Activated CD4-positive, alpha-beta T cell treated with anti-CD3 and anti-CD28 coated beads, Interleukin-2, amount 10 ng/mL, durations not matched to agents 24 days and 14 days (primary cell): ENCODE measurements at regions of chrX and their contacts with region 1.

Region 1: GRCh38 chrX:149539283-149540130 is 1.3 kb upstream of the EOLA1 start:
- DNase-seq: peak; percentile 95
- H3K4me3 Mint-ChIP-seq: peak overlapping the region; percentile 100
- H3K27ac Mint-ChIP-seq: peak overlapping the region; percentile 91
- H3K4me1 Mint-ChIP-seq: peaks cover 12% of the 10 kb centered on the region
- H3K27me3 Mint-ChIP-seq: no peaks in the 10 kb centered on the region

Region 2: GRCh38 chrX:149504915-149505651 is 34.4 kb before region 1 on chrX and contains the start of gene IDS:
- intact Hi-C with region 1: loop called (anchors 2 kb)
- DNase-seq: peak; percentile 97
- H3K4me3 Mint-ChIP-seq: peak within 1 kb of the TSS; percentile 88
- H3K27ac Mint-ChIP-seq: peak within 1 kb of the TSS; percentile 96
- H3K4me1 Mint-ChIP-seq: peaks cover 31% of the 10 kb centered on the region
- H3K27me3 Mint-ChIP-seq: no peaks in the 10 kb centered on the region
- total RNA-seq, gene IDS: 43.9 and 44.9 TPM in 2 replicates

Region 3: GRCh38 chrX:150568320-150569154 is 1029.0 kb after region 1 on chrX and contains the start of gene MTM1:
- intact Hi-C with region 1: loop called (anchors 5 kb)
- DNase-seq: peak; percentile 97
- H3K4me3 Mint-ChIP-seq: peak within 1 kb of the TSS; percentile 86
- H3K27ac Mint-ChIP-seq: peak within 1 kb of the TSS; percentile 81
- H3K4me1 Mint-ChIP-seq: peaks cover 33% of the 10 kb centered on the region
- H3K27me3 Mint-ChIP-seq: no peaks in the 10 kb centered on the region
- total RNA-seq, gene MTM1: 18.2 and 23.7 TPM in 2 replicates